ENCODE measurements at regions of chr12 and their contacts with region 1.

Region 1: DNA sequence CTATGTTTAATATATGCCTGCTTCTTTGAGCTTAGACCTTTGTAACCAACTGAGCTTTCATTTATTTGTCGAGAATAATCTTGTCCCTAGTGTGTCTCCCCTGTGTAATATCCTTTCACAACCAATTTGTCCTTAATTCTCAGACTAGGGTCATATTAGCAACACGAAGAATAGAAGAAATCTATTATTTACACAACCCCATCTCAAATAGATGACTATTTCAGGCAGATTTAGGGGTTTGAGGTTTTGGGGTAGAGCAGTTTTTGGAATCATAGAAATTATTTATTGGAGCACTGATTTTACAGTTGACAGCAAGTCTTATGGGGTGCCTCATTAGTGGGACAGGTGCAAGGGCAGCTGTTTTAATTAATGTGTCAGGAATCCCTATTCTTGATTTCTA is 91.2 kb upstream of the ANO4 start:
- DNase-seq: no peak
- H3K4me3 ChIP-seq: no peak overlapping the region
- H3K27ac ChIP-seq: no peak overlapping the region
- H3K4me1 ChIP-seq: no peaks in the 10 kb centered on the region
- H3K27me3 ChIP-seq: peaks cover 4% of the 10 kb centered on the region
- CTCF ChIP-seq: no peak

Region 2: DNA sequence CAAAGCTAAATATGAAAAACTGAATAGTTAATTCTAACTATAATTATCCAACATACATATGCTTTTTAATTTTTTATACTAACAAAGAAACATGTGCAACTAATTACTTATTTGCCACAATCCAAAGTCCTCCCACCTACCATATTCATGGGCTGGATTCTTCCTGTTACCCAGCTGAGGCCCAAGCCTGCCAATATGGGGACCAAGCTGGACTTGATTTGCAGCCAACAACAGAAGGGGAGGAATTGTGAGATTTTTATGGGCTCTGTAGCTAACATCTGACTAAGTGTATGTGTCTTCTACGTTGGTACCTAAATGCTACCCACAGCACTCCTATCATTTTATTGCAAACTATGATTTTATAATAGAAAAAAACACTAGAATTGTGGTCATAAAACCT is 705.5 kb before region 1 on chr12:
- CTCF ChIA-PET with region 1: no interaction called
- POLR2A ChIA-PET with region 1: interaction called, 16 read pairs
- intact Hi-C with region 1: no loop called
- DNase-seq: no peak
- H3K4me3 ChIP-seq: no peak overlapping the region
- H3K27ac ChIP-seq: no peak overlapping the region
- H3K4me1 ChIP-seq: no peaks in the 10 kb centered on the region
- H3K27me3 ChIP-seq: no peaks in the 10 kb centered on the region
- CTCF ChIP-seq: no peak

Region 3: GRCh38 chr12:101076921-101077320 is 373.6 kb after region 1 on chr12:
- CTCF ChIA-PET with region 1: no interaction called
- POLR2A ChIA-PET with region 1: no interaction called
- intact Hi-C with region 1: no loop called
- DNase-seq: peak; percentile 78
- H3K4me3 ChIP-seq: no peak overlapping the region
- H3K27ac ChIP-seq: peak overlapping the region; percentile 62
- H3K4me1 ChIP-seq: peaks cover 28% of the 10 kb centered on the region
- H3K27me3 ChIP-seq: no peaks in the 10 kb centered on the region
- CTCF ChIP-seq: no peak

Measured in A673 (cell line).